IMR-90 (cell line): ENCODE measurements at regions of chr12 and their contacts with region 1.

Region 1: GRCh38 chr12:68745904-68746571 is at the start of gene SLC35E3:
- DNase-seq: peak; percentile 75
- ATAC-seq: peak; percentile 97
- H3K4me3 ChIP-seq: peak within 1 kb of the TSS; percentile 77
- H3K27ac ChIP-seq: peak within 1 kb of the TSS; percentile 67
- H3K4me1 ChIP-seq: no peaks in the 10 kb centered on the region
- H3K27me3 ChIP-seq: no peaks in the 10 kb centered on the region
- CTCF ChIP-seq: no peak
- POLR2A ChIP-seq: 0 out of 2 replicates have a peak, but pooled peaks have one; percentile 42
- RAD21 ChIP-seq: 0 out of 2 replicates have a peak, but pooled peaks have one; percentile 3
- total RNA-seq, gene SLC35E3: 3.6 TPM in 2 replicates

Region 2: DNA sequence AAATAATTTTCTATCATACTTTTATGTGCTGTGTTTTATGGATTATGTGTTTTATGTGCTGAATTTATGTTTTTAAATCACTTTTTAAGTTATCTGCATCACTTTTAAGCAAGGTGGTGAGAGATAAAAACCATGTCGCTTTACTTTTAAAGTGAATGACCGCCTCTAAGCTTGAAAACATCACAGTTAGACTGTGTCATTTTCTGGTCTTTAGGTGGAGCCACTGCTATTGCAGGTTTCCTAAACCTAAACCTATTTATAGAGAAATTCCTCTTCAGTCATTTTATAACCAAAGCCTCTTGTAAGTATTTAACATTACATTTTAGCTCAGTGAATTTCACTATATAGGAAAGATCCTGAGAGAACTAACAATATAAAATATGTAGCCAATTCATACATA is 40.9 kb after region 1 on chr12:
- CTCF ChIA-PET with region 1: no interaction called
- POLR2A ChIA-PET with region 1: no interaction called
- dilution Hi-C with region 1: no loop called
- in situ Hi-C with region 1: no loop called
- intact Hi-C with region 1: loop called (anchors 5 kb)
- DNase-seq: no peak
- ATAC-seq: peak; percentile 28
- H3K4me3 ChIP-seq: no peak overlapping the region
- H3K27ac ChIP-seq: no peak overlapping the region
- H3K4me1 ChIP-seq: peaks cover 4% of the 10 kb centered on the region
- H3K27me3 ChIP-seq: no peaks in the 10 kb centered on the region
- CTCF ChIP-seq: peak; percentile 12; the same call in 1 of the 2 replicates
- POLR2A ChIP-seq: no peak
- RAD21 ChIP-seq: no peak